Psoas muscle (tissue), 8 donors: ENCODE measurements at regions of chr6 and their contacts with region 1.

Region 1: DNA sequence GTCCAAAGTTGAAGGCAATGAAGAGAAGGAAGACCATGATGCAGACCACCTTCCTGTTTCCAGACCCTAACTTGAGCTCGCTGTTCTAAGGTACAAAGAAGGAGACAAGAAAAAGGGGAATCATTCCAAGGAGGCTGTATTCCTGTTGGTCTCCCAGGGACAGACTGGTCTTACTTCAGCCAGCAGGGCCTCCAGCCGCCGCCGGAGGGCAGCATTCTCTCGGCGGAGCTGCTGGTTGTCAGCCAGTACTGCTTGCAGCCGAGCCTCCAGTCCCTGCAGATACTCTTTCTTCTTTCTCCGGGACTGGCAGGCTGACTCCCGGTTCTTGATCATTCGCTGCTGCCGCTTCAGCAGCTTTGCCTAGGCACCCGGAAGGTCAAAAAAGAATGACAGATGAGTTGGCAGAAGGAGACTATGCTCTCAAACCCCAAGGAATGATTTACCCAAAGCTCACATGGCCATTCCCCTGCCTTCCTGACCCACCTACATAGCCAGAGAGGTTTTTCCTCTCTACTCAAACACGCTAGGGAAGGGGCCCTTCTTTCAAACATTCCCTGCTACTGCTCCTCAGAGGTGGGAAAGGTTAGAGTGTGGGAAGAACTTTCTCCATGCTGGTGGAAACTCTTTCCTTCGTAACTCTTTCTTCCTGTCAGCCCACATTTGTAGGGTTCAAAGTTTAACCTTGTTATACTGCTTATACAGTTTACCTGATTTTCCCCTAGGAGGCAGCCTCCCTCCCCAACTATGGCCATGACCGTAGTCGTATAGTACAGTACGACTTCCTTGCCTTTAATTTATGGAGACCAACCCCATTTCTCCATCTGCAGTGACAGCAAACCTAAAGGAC is 9.0 kb downstream of the ATF6B start:
- DNase-seq: peak; percentile 87 to 92
- ATAC-seq: peak; percentile 84 to 93 (median 90)
- H3K4me3 ChIP-seq: no peak overlapping the region
- H3K27ac ChIP-seq: no peak overlapping the region
- H3K4me1 ChIP-seq: peaks cover 7% of the 10 kb centered on the region
- H3K27me3 ChIP-seq: no peaks in the 10 kb centered on the region
- CTCF ChIP-seq: peak; percentile 93

Region 2: DNA sequence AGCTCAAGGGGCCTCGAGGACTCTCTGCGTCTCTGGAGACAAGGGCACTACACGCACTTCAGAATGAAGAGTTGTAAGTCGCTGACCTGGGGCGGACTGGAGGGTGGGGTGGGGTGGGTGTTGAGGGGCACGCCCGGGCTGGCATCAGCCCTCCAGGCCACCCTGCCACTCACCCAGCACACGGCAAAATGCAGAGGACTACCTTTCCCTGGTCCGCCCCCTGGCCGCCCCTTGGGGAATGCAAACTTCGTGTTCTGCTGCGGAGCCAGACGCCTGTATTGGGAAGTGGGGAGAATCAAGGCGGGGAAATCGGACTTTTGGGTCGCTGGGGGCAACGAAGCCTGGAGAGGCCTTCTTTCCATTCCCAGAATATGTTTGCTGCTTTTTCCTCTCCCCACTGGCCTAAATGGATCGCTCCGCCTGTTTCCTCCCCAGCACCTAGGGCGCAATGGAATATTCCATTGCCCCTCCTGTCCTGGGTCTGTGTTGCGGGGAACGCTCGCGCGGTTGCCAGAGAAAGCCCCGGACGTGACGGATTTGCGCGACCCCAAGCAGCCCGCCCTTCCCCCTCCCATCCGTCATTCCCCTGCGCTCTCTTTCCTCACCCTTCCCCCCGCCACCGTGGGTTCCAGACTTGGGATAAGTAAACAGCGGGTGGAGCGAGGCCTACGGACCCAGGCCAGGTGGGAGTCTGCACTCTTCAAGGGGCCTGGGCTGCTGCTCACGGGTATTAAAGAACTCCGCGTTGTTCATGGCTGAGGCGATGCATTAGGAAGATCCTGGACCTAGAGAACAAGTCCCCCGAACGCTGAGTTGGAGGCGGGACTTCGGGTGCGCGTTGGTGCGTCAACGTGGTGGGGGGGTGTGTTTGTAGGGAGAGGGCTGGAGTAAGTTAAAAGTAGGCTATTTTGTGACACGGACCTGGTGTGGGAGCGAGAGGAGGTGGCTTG is 34.8 kb after region 1 on chr6 and contains the start of gene PPT2:
- intact Hi-C with region 1: loop called (anchors 1 to 5 kb)
- DNase-seq: peak; percentile 93 to 95
- ATAC-seq: peak; percentile 82 to 93 (median 89)
- H3K4me3 ChIP-seq: peak within 1 kb of the TSS; percentile 76
- H3K27ac ChIP-seq: peak within 1 kb of the TSS; percentile 74
- H3K4me1 ChIP-seq: peaks cover 9% of the 10 kb centered on the region
- H3K27me3 ChIP-seq: peaks cover 0 to 15% (median 7%) of the 10 kb centered on the region in 3 donors
- CTCF ChIP-seq: peak; percentile 13
- total RNA-seq, gene PPT2: 11.3 to 15.1 (median 14.0) TPM

Region 3: GRCh38 chr6:32195652-32195901 is 76.6 kb after region 1 on chr6:
- intact Hi-C with region 1: loop called (anchors 1 to 5 kb)
- DNase-seq: peak; percentile 100
- ATAC-seq: peak; percentile 88 to 93 (median 92)
- H3K4me3 ChIP-seq: peak overlapping the region; percentile 88
- H3K27ac ChIP-seq: peak overlapping the region; percentile 99
- H3K4me1 ChIP-seq: peaks cover 24% of the 10 kb centered on the region
- H3K27me3 ChIP-seq: no peaks in the 10 kb centered on the region
- CTCF ChIP-seq: peak; percentile 48

Region 4: DNA sequence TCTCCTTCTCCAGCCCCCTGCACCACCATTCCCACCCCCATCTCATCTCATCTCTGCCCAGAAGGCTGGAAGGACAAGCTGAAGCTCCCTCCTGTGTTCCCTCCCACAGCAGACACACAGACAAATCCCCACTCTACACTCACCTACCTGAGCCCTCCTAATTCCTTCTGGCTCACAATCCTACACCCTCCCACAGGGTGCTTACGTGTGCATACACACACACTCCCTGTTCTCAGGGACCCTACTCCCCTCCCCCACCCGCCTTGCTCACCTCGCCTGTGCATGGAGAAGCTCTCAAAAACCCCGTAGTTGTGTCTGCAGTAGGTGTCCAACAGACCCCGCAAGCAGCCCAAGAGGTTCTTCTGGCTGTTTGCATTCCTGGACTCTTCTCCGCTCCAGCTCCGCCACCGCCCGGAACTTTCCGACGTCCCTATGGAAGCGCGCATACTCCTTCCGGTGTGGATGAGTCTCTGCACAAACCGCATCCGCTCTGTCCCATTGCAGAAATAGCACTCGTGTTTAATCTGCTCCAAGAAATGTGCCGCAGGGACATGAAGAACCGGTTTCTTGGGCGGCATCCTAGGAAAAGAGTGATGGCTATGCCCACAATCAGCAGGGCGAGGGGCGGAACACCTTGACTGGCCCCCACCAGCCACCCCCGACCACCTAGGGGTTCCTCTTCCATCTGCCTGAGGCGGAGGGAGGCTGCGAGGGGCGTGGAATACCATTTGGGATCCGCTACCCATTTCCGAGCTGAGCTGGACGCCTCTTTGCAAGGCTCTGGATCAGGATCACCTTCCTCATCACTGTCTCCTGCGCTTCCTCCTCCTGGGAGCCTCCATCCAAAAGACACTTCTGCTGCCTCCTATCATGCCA is 340.8 kb after region 1 on chr6:
- intact Hi-C with region 1: no loop called
- DNase-seq: no peak
- ATAC-seq: no peak
- H3K4me3 ChIP-seq: no peak overlapping the region
- H3K27ac ChIP-seq: no peak overlapping the region
- H3K4me1 ChIP-seq: no peaks in the 10 kb centered on the region
- H3K27me3 ChIP-seq: peaks cover 0 to 3% (median 0%) of the 10 kb centered on the region in 3 donors
- CTCF ChIP-seq: no peak

Region 5: GRCh38 chr6:32589598-32590449 is 470.8 kb after region 1 on chr6 and contains the start of gene HLA-DRB1:
- intact Hi-C with region 1: no loop called
- DNase-seq: peak; percentile 15 to 57
- ATAC-seq: peak; percentile 63 to 92 (median 76)
- H3K4me3 ChIP-seq: no peak within 1 kb of the TSS
- H3K27ac ChIP-seq: no peak within 1 kb of the TSS
- H3K4me1 ChIP-seq: no peaks in the 10 kb centered on the region
- H3K27me3 ChIP-seq: no peaks in the 10 kb centered on the region
- CTCF ChIP-seq: no peak
- total RNA-seq, gene HLA-DRB1: 16.9 to 49.4 (median 29.8) TPM